ENCODE measurements at regions of chr10 and their contacts with region 1.

Region 1: DNA sequence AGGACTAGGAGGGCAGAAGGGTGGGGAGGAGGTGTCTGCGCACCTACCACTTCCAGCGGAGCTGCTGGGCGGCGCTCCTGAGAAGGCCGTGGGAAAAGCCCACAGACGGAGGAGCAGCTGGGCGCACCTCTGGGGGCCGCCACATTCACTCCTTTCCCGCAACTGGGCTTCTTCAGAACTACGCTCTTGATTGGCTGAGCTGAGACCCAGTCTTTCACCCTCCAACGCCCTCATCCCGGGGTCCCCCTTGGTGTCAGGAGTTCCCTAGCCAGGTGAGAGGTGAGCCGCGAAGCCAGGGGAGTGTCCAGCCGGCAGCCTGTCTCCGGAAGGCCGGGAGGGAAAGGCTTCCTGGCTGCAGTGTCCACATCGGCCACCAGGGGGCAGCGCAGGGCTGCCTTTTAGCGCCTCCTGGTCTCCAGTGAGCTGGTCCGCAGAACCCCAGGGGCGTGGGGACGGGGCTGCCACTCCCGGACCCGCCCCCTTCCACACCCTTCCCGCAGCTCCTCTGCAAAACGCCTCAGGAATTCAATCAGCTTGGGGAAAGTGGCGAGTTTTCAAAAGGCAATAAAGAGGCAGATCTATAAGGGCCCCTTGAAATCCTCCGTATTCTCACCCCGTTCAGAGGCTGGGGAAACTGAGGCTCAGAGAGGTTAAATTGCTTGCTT is 98.8 kb downstream of the CHST15 start:
- DNase-seq: peak; percentile 65 to 79 (median 70)
- H3K4me3 ChIP-seq: no peak overlapping the region
- H3K4me3 Mint-ChIP-seq: peak overlapping the region in 7 of 8 donors; percentile 49 to 82 (median 73)
- H3K27ac ChIP-seq: no peak overlapping the region
- H3K27ac Mint-ChIP-seq: peak overlapping the region in 1 of 7 donors; percentile 79
- H3K4me1 ChIP-seq: peaks cover 14% of the 10 kb centered on the region
- H3K4me1 Mint-ChIP-seq: peaks cover 4 to 17% (median 10%) of the 10 kb centered on the region in 4 donors
- H3K27me3 ChIP-seq: peaks cover 9% of the 10 kb centered on the region
- H3K27me3 Mint-ChIP-seq: peaks cover 38 to 62% of the 10 kb centered on the region in 2 donors

Region 2: GRCh38 chr10:123093489-123094231 is 900.9 kb before region 1 on chr10:
- CTCF ChIA-PET with region 1: no interaction called
- POLR2A ChIA-PET with region 1: no interaction called
- intact Hi-C with region 1: no loop called
- DNase-seq: no peak
- H3K4me3 ChIP-seq: no peak overlapping the region
- H3K4me3 Mint-ChIP-seq: no peak overlapping the region
- H3K27ac ChIP-seq: no peak overlapping the region
- H3K27ac Mint-ChIP-seq: no peak overlapping the region
- H3K4me1 ChIP-seq: no peaks in the 10 kb centered on the region
- H3K4me1 Mint-ChIP-seq: no peaks in the 10 kb centered on the region
- H3K27me3 ChIP-seq: no peaks in the 10 kb centered on the region
- H3K27me3 Mint-ChIP-seq: peaks cover 12 to 29% of the 10 kb centered on the region in 2 donors

Region 3: DNA sequence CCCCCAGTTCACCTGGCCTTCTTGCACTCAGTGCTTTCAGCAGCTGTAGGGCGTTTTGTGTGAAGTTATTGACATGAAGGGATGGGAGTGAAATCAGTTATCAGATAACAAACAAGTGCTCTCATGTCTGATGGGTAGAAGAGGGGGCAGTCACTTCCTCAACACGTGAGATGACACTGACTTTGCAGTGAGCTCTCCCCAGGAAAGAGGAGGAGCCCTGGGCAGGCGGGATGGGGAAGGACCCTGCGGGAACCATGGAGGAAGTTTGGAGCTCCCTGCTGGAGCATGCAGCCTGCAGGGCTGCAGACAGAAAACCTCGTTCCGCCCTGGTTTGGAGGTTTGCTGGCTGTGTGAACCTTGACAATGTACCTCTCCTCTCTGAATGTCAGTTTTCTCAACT is 289.7 kb before region 1 on chr10:
- CTCF ChIA-PET with region 1: no interaction called
- POLR2A ChIA-PET with region 1: no interaction called
- intact Hi-C with region 1: no loop called
- DNase-seq: no peak
- H3K4me3 ChIP-seq: no peak overlapping the region
- H3K4me3 Mint-ChIP-seq: no peak overlapping the region
- H3K27ac ChIP-seq: no peak overlapping the region
- H3K27ac Mint-ChIP-seq: no peak overlapping the region
- H3K4me1 ChIP-seq: no peaks in the 10 kb centered on the region
- H3K4me1 Mint-ChIP-seq: no peaks in the 10 kb centered on the region
- H3K27me3 ChIP-seq: no peaks in the 10 kb centered on the region
- H3K27me3 Mint-ChIP-seq: peaks cover 2 to 4% of the 10 kb centered on the region in 2 donors

Region 4: GRCh38 chr10:124010563-124011131 is 16.1 kb after region 1 on chr10:
- CTCF ChIA-PET with region 1: interaction called, 10 read pairs
- POLR2A ChIA-PET with region 1: no interaction called
- intact Hi-C with region 1: no loop called
- DNase-seq: no peak
- H3K4me3 ChIP-seq: no peak overlapping the region
- H3K4me3 Mint-ChIP-seq: no peak overlapping the region
- H3K27ac ChIP-seq: no peak overlapping the region
- H3K27ac Mint-ChIP-seq: no peak overlapping the region
- H3K4me1 ChIP-seq: no peaks in the 10 kb centered on the region
- H3K4me1 Mint-ChIP-seq: no peaks in the 10 kb centered on the region
- H3K27me3 ChIP-seq: no peaks in the 10 kb centered on the region
- H3K27me3 Mint-ChIP-seq: no peaks in the 10 kb centered on the region

Region 5: DNA sequence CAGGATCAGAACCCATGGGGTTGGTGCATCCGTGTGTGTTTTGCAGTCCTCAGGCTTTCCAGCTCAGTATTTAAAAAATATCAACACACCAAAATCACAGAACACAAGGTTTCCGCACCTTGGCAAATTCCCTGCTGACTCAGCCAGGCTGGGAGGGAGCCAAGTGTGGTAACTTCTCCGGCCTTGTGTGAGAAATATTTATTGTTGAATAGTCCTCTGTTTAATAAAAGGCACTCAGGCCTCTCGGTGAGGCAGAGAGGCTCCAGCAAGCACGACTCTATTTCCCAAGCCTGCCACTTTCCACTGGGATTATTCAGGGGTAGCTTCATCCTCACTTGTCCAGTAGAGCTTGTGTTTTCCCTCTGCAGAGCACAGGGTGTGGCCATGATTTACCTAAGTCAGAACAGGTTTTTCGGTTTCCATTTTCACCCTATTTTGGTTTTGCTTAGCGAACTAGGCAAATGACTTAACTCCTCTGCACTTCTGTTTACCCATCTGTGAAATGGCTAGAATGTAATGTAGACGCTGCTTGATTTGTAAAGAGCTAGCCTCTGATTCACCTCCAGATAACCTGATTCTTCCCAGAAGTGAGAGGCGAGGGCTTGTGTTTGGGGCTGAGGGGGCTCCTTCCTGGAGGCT is 111.8 kb after region 1 on chr10:
- CTCF ChIA-PET with region 1: no interaction called
- POLR2A ChIA-PET with region 1: no interaction called
- intact Hi-C with region 1: no loop called
- DNase-seq: no peak
- H3K4me3 ChIP-seq: no peak overlapping the region
- H3K4me3 Mint-ChIP-seq: no peak overlapping the region
- H3K27ac ChIP-seq: no peak overlapping the region
- H3K27ac Mint-ChIP-seq: no peak overlapping the region
- H3K4me1 ChIP-seq: no peaks in the 10 kb centered on the region
- H3K4me1 Mint-ChIP-seq: peaks cover 0 to 2% (median under 1%) of the 10 kb centered on the region in 4 donors
- H3K27me3 ChIP-seq: no peaks in the 10 kb centered on the region
- H3K27me3 Mint-ChIP-seq: peaks cover 3 to 13% of the 10 kb centered on the region in 2 donors

Region 6: DNA sequence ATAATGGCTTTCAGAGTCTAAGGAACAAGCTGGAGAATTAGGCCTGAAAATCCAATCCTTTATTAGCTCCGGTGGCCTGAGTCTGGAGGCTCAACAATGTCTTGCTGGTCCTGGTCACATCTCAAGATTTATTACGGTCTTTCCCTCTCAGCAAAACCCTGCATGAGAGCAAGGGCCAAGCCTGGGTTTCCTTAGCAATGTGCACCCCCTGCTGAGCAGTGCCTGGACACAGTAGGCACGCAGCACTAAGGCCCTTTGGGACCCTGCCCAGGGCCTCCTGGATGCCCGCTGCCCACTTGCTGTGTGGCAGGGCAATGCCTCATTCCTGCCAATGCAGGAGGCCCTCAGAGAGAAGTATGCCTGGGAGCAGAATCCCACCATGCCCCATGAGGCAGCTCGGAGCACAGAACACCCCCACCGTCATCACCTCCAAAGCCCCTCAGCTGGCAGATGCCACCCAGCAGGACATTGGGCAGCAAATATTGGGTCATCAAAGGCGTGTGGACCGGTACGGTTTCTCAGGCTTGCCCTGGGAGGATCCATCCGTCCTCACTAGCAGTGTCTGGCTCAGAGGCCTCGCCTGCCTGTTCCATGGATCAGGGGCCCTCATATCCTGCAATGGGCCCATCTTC is 267.8 kb after region 1 on chr10:
- CTCF ChIA-PET with region 1: interaction called, 11 read pairs
- POLR2A ChIA-PET with region 1: no interaction called
- intact Hi-C with region 1: no loop called
- DNase-seq: no peak
- H3K4me3 ChIP-seq: no peak overlapping the region
- H3K4me3 Mint-ChIP-seq: no peak overlapping the region
- H3K27ac ChIP-seq: no peak overlapping the region
- H3K27ac Mint-ChIP-seq: peak overlapping the region in 1 of 7 donors; percentile 8
- H3K4me1 ChIP-seq: no peaks in the 10 kb centered on the region
- H3K4me1 Mint-ChIP-seq: no peaks in the 10 kb centered on the region
- H3K27me3 ChIP-seq: no peaks in the 10 kb centered on the region
- H3K27me3 Mint-ChIP-seq: peaks cover 1 to 2% of the 10 kb centered on the region in 2 donors

Region 7: DNA sequence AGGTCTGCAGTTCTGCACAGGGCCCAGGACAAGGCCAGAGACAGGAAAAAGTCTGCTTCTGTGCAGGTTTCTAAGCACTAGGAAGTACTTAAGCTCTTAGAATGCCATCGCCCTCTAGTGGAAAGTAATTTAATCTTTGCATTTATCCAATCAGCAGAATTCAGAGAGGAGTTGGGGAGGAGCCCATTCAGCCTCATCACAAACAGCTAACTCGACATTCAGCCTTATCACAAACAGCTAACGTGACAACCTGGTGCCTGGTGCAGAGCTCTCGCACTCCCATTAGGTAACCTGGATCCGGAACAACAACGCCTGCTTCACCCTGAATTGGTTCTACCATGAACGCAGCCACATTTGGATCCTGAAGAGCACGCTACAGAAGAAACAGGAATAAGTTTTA is 409.0 kb after region 1 on chr10:
- CTCF ChIA-PET with region 1: interaction called, 31 read pairs
- POLR2A ChIA-PET with region 1: interaction called, 3 read pairs
- intact Hi-C with region 1: no loop called
- DNase-seq: peak; percentile 54 to 75 (median 68)
- H3K4me3 ChIP-seq: no peak overlapping the region
- H3K4me3 Mint-ChIP-seq: peak overlapping the region in 1 of 8 donors; percentile 45
- H3K27ac ChIP-seq: no peak overlapping the region
- H3K27ac Mint-ChIP-seq: peak overlapping the region; percentile 39 to 90 (median 85)
- H3K4me1 ChIP-seq: peaks cover 7% of the 10 kb centered on the region
- H3K4me1 Mint-ChIP-seq: peaks cover 8 to 11% (median 9%) of the 10 kb centered on the region in 4 donors
- H3K27me3 ChIP-seq: no peaks in the 10 kb centered on the region
- H3K27me3 Mint-ChIP-seq: no peaks in the 10 kb centered on the region